Heart right ventricle (tissue), 16 donors: ENCODE measurements at regions of chr3 and their contacts with region 1.

Region 1: GRCh38 chr3:183377307-183377959 is 51.0 kb downstream of the MCF2L2 start:
- DNase-seq: no peak
- ATAC-seq: no peak
- H3K4me3 ChIP-seq: no peak overlapping the region
- H3K27ac ChIP-seq: no peak overlapping the region
- H3K4me1 ChIP-seq: peaks cover 0 to 49% (median 0%) of the 10 kb centered on the region in 9 donors
- H3K27me3 ChIP-seq: peaks cover 0 to 6% (median 0%) of the 10 kb centered on the region in 7 donors
- CTCF ChIP-seq: no peak

Region 2: GRCh38 chr3:183178629-183179549 is 198.5 kb before region 1 on chr3:
- intact Hi-C with region 1: loop called in 8 of 10 experiments (anchors 1 to 2 kb)
- DNase-seq: peak in 1 of 2 donors; percentile 30
- ATAC-seq: peak; percentile 53 to 72 (median 67)
- H3K4me3 ChIP-seq: peak overlapping the region; percentile 34 to 62 (median 57)
- H3K27ac ChIP-seq: no peak overlapping the region
- H3K4me1 ChIP-seq: peaks cover 0 to 23% (median 17%) of the 10 kb centered on the region in 9 donors
- H3K27me3 ChIP-seq: peaks cover 0 to 66% (median 53%) of the 10 kb centered on the region in 7 donors
- CTCF ChIP-seq: peak in 4 of 9 donors; percentile 12 to 34 (median 32)

Region 3: DNA sequence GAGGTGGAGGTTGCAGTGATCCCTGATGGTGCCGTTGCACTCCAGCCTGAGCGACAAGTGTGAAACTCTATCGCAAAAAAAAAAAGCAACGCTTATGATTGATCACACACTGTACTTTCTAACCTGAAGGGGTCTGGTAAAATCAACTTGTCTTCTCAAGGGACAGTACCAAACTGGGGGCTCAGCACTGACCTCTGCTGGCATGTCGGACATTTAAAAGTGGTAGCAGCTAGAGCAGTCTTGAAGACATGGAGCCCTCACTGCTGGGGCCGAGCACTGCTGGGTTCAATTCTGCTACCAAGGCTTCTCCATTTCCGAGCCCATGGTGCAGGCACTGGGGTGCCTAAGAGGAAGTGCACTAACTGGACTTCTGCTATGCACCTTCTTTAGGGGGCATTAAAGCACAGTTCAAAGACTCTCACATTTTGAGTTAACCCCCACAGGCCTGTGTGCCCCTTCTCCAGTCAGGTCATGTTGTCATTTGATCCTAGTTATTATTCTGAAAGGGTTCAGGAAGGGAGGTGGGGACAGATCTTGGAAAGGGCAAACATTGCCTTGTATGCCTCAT is 188.5 kb before region 1 on chr3:
- intact Hi-C with region 1: loop called in 9 of 10 experiments (anchors 1 to 2 kb)
- DNase-seq: peak in 1 of 2 donors; percentile 44
- ATAC-seq: peak in 5 of 8 donors; percentile 27 to 59 (median 41)
- H3K4me3 ChIP-seq: no peak overlapping the region
- H3K27ac ChIP-seq: no peak overlapping the region
- H3K4me1 ChIP-seq: peaks cover 0 to 20% (median 0%) of the 10 kb centered on the region in 9 donors
- H3K27me3 ChIP-seq: peaks cover 0 to 4% (median 0%) of the 10 kb centered on the region in 7 donors
- CTCF ChIP-seq: peak in 7 of 9 donors; percentile 29 to 60 (median 43)

Region 4: DNA sequence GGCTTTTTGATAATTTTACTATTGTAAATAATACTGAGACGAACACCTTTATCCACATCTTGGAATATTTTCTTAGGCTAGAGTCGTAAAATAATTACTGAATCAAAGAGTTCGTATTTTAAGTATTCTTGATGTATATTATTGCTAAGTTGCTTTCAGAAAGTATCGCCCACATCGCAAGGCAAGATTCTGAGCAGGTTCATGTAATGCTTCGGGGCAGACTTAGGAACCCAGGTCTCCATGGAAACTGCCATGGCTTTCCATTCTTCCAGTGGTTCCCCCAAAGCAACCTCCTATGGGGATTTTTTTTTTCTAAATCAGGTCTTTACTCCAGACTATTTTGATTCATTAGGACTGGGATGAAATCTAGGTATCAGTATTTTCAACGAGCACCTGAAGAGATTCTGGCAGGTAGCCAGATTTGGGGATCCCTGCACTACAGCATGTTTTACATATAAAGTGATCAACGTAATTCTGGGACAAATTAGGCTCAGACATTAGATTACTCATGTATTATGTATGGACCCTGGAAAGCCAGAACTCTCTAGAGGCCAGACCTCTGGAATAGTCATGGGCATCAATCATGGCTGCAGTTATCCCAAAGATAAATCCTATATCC is 37.9 kb before region 1 on chr3:
- intact Hi-C with region 1: no loop called
- DNase-seq: no peak
- ATAC-seq: no peak
- H3K4me3 ChIP-seq: no peak overlapping the region
- H3K27ac ChIP-seq: no peak overlapping the region
- H3K4me1 ChIP-seq: no peaks in the 10 kb centered on the region
- H3K27me3 ChIP-seq: no peaks in the 10 kb centered on the region
- CTCF ChIP-seq: no peak